ENCODE measurements at regions of chr9 and their contacts with region 1.

Region 1: DNA sequence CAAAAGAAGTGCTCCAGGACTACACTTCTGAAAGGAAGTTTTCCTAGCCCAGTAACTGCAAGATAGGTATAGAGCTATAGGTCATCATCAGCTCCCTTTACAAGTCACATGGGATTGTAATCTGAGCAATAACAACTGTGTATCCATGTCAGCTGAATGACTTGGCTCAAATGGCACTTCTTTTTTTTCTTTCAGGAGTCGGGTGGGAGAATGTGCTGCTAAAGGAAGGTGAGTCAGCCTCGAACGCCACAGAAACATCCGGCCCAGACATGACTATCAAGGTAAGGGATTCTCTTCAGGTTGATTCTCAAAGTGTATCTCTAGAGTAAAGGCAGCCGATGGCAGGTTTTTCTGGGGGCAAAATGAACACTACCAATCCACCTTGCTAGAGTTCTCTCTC is 192.2 kb downstream of the C9orf152 start:
- DNase-seq: no peak

Region 2: GRCh38 chr9:109959679-109960078 is 56.1 kb before region 1 on chr9:
- intact Hi-C with region 1: loop called in 1 of 2 experiments (anchors 2 kb)
- DNase-seq: no peak

Region 3: DNA sequence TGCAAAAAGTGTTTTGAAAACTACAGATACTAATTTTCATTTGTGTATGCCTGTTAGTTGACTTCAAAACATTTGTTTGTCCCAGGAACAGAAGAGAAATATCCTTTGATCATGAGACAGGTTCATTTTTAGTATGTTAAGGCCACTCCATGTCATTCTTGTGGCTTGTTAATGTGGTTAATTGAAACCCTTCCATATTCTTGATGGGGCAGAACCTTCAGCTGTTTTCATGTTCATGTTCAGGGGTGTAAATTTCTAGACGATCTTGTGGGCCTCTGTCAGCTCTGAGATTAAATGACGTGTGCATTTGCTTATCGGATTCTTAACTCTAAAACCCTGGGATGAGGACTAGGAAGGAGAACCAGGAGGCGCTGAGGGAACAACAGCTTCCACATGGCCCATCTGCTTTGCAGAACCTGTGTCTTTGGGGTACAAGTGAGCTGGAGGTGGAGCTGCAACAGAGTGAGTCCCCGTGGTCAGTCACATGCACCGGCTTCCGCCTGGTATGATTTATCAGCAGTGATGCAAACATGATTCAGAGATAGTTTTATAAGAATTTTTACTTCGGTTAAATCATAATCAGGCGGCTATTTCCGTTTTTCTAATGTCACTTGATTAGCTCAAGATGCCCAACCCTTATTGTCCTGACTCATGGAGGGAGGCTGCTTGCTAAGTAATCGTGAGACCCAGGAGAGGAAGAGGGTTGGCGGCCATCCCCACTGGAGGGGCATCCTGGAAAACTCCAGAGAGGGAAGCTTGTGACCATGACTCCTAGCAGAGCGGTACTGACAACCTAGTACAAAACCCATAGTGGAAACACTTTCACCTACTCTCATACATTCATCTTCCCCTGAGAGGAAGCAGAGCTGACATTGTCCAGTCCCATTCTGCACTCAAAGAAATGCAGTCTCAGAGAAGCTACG is 53.8 kb after region 1 on chr9:
- intact Hi-C with region 1: no loop called
- DNase-seq: peak; percentile 88

Measured in posterior vena cava (tissue), 2 donors.